Thyroid gland (tissue), 4 donors: ENCODE measurements at regions of chr17 and their contacts with region 1.

Region 1: DNA sequence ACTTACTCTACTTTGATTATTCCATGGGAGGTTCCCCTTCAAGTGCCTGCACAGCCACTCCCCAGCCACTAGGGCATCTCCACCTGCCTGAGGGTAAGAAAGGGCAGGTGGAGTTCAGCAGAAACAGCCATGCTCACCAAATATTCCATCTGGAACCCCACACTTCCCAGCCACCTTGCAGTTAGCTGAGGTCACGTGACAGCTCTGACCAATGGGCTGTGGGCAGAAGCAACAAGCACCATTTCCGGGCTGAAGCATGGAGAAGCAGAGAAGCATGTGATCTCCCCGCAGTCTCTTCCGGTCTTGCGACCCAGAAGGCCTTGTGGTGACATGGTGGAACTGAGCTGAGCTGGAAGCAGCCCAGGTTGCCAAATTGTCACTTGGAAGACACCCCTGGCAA is 108.6 kb downstream of the CCT6B start:
- DNase-seq: no peak
- H3K4me3 ChIP-seq: no peak overlapping the region
- H3K27ac ChIP-seq: no peak overlapping the region
- H3K4me1 ChIP-seq: no peaks in the 10 kb centered on the region
- H3K27me3 ChIP-seq: no peaks in the 10 kb centered on the region
- CTCF ChIP-seq: no peak
- POLR2A ChIP-seq: no peak

Region 2: GRCh38 chr17:34721326-34721725 is 131.3 kb before region 1 on chr17:
- intact Hi-C with region 1: no loop called
- DNase-seq: no peak
- H3K4me3 ChIP-seq: no peak overlapping the region
- H3K27ac ChIP-seq: no peak overlapping the region
- H3K4me1 ChIP-seq: no peaks in the 10 kb centered on the region
- H3K27me3 ChIP-seq: no peaks in the 10 kb centered on the region
- CTCF ChIP-seq: no peak
- POLR2A ChIP-seq: no peak

Region 3: GRCh38 chr17:34797720-34798119 is 54.9 kb before region 1 on chr17:
- intact Hi-C with region 1: loop called (anchors 10 kb)
- DNase-seq: peak; percentile 3 to 30
- H3K4me3 ChIP-seq: no peak overlapping the region
- H3K27ac ChIP-seq: no peak overlapping the region
- H3K4me1 ChIP-seq: no peaks in the 10 kb centered on the region
- H3K27me3 ChIP-seq: no peaks in the 10 kb centered on the region
- CTCF ChIP-seq: no peak
- POLR2A ChIP-seq: no peak

Region 4: DNA sequence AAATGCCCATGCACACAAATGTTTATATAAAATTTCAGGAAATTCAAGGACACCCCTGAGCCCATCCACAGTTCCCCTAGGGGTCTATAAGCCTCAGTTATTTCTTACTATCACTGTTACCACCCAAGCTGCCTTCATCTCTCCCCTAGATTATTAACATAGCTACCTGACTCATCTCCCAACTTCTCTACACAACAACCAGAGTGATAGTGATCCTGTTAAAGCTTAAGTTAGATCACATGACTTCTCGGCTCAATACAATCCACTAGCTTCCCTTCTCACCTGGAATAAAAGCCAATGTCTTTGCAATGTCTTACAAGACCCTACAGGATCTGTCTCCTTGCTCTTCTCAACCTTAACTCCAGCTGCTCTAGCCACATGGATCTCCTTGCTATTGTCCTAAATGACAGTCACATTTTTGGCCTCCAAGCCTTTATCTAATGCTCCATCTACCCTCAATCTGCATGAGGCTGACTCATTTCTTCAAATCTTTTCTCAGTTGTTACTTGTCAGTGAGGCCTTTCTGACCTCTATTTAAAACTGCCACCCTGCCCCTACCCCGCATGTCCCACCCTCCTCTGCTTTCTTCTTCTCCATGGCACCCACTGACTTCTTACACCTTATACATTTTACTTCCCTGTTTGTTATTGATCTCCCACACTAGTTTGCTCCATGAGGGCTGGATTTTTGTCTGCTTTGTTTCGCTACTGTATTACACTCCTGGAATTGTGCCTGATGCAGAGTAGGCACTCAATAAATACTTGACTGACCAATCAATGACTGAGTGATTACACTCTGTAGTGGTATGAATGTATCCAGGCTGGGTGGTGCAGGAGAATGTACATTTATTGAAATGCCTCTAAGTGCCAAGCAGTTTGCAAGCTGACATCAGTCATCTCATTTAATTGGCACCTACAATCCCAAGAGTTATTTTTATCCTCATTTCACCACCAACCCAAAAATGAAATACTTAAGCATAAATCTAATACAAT is 122.5 kb after region 1 on chr17:
- intact Hi-C with region 1: no loop called
- DNase-seq: no peak
- H3K4me3 ChIP-seq: no peak overlapping the region
- H3K27ac ChIP-seq: no peak overlapping the region
- H3K4me1 ChIP-seq: peaks cover 0 to 4% of the 10 kb centered on the region in 2 donors
- H3K27me3 ChIP-seq: no peaks in the 10 kb centered on the region
- CTCF ChIP-seq: no peak
- POLR2A ChIP-seq: no peak